Right cardiac atrium (tissue), 5 donors: ENCODE measurements at regions of chr15 and their contacts with region 1.

Region 1: GRCh38 chr15:40054605-40055545 is 15.9 kb upstream of the SRP14 start:
- DNase-seq: peak in 1 of 3 donors; percentile 43
- ATAC-seq: peak; percentile 3 to 4
- H3K4me3 ChIP-seq: no peak overlapping the region
- H3K27ac ChIP-seq: no peak overlapping the region
- H3K4me1 ChIP-seq: no peaks in the 10 kb centered on the region
- H3K27me3 ChIP-seq: no peaks in the 10 kb centered on the region

Region 2: GRCh38 chr15:40160689-40161688 is 106.1 kb after region 1 on chr15 and contains the start of gene BUB1B:
- intact Hi-C with region 1: loop called in 1 of 4 experiments (anchors 10 kb)
- DNase-seq: peak; percentile 91 to 96 (median 95)
- ATAC-seq: peak; percentile 98
- H3K4me3 ChIP-seq: peak within 1 kb of the TSS; percentile 42
- H3K27ac ChIP-seq: no peak within 1 kb of the TSS
- H3K4me1 ChIP-seq: no peaks in the 10 kb centered on the region
- H3K27me3 ChIP-seq: no peaks in the 10 kb centered on the region
- total RNA-seq, gene BUB1B: 1.4 to 1.8 (median 1.7) TPM in 3 of 4 donors, not detected in the other

Region 3: GRCh38 chr15:40217159-40217824 is 162.4 kb after region 1 on chr15:
- intact Hi-C with region 1: loop called in 1 of 4 experiments (anchors 10 kb)
- DNase-seq: no peak
- ATAC-seq: peak; percentile 88 to 90
- H3K4me3 ChIP-seq: no peak overlapping the region
- H3K27ac ChIP-seq: no peak overlapping the region
- H3K4me1 ChIP-seq: no peaks in the 10 kb centered on the region
- H3K27me3 ChIP-seq: no peaks in the 10 kb centered on the region